ENCODE measurements at regions of chr19 and their contacts with region 1.

Region 1: GRCh38 chr19:1455336-1456120 is 5.6 kb downstream of the APC2 start:
- DNase-seq: peak; percentile 77
- H3K4me3 ChIP-seq: no peak overlapping the region
- H3K27ac ChIP-seq: no peak overlapping the region
- H3K4me1 ChIP-seq: peaks cover 29% of the 10 kb centered on the region
- H3K27me3 ChIP-seq: peaks cover 21% of the 10 kb centered on the region
- CTCF ChIP-seq: no peak

Region 2: GRCh38 chr19:1241417-1242095 is 214.0 kb before region 1 on chr19 and contains the start of gene ATP5F1D:
- CTCF ChIA-PET with region 1: no interaction called
- POLR2A ChIA-PET with region 1: no interaction called
- intact Hi-C with region 1: no loop called
- DNase-seq: peak; percentile 97
- H3K4me3 ChIP-seq: peak within 1 kb of the TSS; percentile 98
- H3K27ac ChIP-seq: peak within 1 kb of the TSS; percentile 95
- H3K4me1 ChIP-seq: peaks cover 49% of the 10 kb centered on the region
- H3K27me3 ChIP-seq: no peaks in the 10 kb centered on the region
- CTCF ChIP-seq: no peak
- total RNA-seq, gene ATP5F1D: 237 and 250 TPM in 2 replicates

Region 3: GRCh38 chr19:1472231-1473084 is 16.9 kb after region 1 on chr19:
- CTCF ChIA-PET with region 1: no interaction called
- POLR2A ChIA-PET with region 1: interaction called, 10 read pairs
- intact Hi-C with region 1: no loop called
- DNase-seq: no peak
- H3K4me3 ChIP-seq: no peak overlapping the region
- H3K27ac ChIP-seq: no peak overlapping the region
- H3K4me1 ChIP-seq: peaks cover 27% of the 10 kb centered on the region
- H3K27me3 ChIP-seq: peaks cover 47% of the 10 kb centered on the region
- CTCF ChIP-seq: no peak

Region 4: DNA sequence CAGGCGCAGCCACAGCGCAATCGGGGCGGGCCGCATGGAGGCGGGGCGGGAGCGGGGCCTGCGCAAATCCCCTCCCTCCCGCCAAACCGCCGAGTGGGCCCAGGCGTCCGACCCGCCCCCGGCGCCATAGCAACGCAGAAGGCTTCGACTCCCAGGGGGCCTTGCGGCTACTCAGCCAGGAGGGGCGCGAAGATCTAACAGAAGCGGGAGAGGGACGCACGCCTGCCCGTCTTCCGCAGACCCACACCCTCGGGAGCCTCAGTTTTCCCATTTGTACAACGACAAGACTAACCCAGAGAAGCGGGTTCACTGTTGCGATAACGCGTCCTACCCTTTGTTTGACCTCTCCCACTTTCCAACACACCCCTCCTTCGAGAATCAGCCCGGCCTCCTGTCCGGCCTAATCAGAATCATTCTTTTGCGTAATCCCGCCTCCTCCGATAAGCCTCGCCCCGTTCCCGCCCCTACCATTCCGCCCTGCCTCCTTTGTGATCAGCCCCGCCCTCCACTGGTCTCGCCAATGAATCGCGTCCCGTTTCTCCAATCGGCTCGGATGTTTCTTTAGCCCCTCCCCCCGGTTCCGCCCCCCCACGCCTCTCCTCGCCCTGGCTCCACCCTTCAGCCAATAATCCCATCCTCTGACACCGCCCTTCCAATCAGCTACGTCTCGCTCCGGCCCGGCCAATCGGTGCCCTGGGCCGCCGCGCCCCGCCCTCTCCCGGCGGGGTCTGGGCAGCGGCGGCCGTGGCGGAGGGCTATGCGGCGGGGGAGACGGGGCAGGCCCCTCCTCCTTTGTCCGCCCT is 35.0 kb after region 1 on chr19 and contains the start of gene PCSK4:
- CTCF ChIA-PET with region 1: interaction called, 19 read pairs
- POLR2A ChIA-PET with region 1: interaction called, 13 read pairs
- intact Hi-C with region 1: no loop called
- DNase-seq: peak; percentile 98
- H3K4me3 ChIP-seq: peak within 1 kb of the TSS; percentile 56
- H3K27ac ChIP-seq: peak within 1 kb of the TSS; percentile 83
- H3K4me1 ChIP-seq: peaks cover 11% of the 10 kb centered on the region
- H3K27me3 ChIP-seq: no peaks in the 10 kb centered on the region
- CTCF ChIP-seq: no peak
- total RNA-seq, gene PCSK4: 7.2 and 11.1 TPM in 2 replicates